ENCODE measurements at regions of chr6 and their contacts with region 1.

Region 1: DNA sequence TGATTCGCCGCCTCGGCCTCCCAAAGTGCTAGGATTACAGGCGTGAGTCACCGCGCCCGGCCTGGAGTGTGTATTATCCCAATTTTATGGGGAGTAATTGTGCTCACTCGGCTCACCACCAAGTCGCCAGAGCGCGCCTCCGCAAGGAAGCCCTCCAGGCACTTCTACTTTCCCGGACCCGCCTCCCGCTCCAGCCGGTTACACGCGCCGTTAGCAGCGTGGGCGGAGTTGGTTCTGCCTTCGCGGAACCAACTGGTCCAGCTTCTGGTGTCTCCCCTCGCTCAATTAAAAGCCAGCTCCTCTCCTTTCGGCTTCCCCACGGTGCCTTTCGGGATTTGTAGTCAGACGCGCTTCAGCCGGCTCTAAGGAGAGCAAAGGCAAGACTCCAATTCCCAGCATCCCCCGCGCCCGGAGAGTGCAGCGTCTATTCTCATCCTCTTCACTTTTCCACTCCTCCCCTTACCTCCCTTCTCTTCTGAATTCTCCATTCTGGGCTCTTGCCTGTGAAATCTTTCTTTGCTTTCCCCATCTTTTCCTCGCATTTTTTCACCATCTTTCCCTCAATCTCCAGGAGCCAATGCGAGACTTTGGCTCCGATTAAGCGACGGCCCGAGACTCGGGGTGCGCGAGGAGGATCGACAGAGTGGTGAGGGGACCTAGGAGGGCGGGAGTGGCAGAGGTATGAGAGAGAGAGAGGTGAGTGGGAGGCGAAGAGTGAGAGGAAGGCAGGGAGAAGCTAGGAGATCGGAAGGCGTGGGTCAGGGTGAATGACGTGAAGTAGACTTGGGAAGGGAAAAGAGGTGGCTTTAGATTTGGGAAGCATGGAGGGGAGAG is at the start of gene GTF2H4:
- DNase-seq: peak; percentile 91 to 98
- H3K4me3 ChIP-seq: peak within 1 kb of the TSS; percentile 71 to 95
- H3K27ac ChIP-seq: peak within 1 kb of the TSS; percentile 62 to 65
- H3K4me1 ChIP-seq: peaks cover 0 to 10% of the 10 kb centered on the region in 2 donors
- H3K27me3 ChIP-seq: no peaks in the 10 kb centered on the region
- CTCF ChIP-seq: no peak
- total RNA-seq, gene GTF2H4: 81.0 TPM

Region 2: DNA sequence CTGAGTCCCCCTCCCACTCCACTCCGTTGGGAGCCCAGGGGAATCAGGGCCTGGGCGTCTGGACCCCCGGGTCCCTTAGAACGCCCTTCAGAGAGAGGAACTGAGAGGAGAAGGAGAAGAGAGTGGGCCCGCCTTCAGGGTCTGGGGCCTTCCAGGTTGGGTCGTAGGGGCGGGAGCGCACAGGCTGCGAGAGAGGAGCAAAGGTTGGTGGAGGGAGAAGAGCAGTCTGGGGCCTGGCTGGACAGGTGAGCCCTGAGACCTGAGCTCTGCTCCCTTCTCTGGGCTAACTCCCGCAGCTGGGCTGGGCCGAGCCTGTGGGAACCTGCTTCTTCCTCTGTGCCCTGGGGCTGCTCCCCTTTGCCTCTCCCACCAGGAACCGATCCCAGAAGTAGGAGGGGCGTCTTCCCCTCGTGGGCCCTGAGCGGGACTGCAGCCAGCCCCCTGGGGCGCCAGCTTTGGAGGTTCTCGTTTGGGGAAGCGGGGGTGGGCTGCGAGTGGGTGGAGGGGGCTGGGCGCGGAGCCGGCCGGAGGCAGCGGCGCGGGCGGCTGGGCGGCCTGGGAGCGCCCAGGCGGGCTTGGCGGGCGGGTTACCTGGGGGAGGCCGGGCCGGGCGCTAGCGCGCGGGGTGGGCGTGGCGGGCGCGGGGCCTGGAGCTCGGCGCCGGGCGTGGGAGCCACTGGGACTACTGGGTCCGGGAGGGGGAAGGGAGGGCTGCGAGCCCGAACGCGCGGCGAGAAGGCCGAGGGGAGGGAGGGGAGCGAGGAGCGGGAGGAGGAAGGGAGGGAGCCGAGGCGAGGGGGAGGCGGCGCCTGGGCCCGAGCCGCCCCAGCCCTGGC is 24.1 kb before region 1 on chr6 and contains the start of gene DDR1:
- intact Hi-C with region 1: loop called (anchors 1 kb)
- DNase-seq: peak in 1 of 2 donors; percentile 81
- H3K4me3 ChIP-seq: peak within 1 kb of the TSS; percentile 78 to 87
- H3K27ac ChIP-seq: peak within 1 kb of the TSS; percentile 83 to 90
- H3K4me1 ChIP-seq: peaks cover 0 to 23% of the 10 kb centered on the region in 2 donors
- H3K27me3 ChIP-seq: no peaks in the 10 kb centered on the region
- CTCF ChIP-seq: no peak
- total RNA-seq, gene DDR1: 18.8 TPM

Measured in ascending aorta (tissue), 2 donors.